Activated CD4-positive, alpha-beta memory T cell treated with anti-CD3 and anti-CD28 coated beads for 36 hours (primary cell): ENCODE measurements at regions of chr1 and their contacts with region 1.

Region 1: DNA sequence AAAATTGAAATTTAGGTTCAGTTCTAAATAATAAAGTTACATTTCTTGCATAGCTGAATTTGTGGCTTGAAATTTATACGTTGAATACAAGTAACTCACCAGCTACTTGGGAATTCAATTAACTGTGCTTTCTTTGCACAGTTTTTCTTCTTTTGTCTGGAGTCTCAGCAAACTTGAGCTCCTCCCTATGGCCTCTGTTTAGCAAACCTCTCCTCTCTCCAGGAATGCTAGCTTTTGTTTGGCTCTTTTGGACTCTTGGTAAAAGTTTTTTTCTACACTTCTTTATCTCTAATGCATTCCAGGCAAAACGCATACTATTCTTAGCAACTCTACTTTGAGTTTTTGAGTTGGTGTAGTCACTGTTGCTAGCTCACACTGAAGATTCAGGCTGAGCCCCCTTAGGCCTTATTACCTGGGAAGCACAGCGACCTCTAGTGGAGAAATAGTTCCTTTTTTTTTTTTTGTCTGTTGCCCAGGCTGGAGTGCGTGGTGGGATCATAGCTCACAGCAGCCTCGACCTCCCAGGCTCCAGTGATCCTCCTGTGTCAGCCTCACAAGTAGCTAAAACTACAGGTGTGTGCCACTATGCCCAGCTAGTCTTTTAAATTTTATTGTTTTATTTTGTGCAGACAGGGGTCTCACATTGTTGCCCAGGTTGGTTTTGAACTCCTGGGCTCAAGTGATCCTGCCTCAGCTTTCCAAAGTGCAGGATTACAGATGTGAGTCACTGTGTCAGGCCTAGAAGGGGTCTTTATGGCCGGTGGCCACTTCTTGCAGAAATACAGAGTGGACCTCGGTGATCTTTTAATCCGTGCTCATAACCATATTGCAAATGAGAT is 61.7 kb downstream of the CASQ2 start:
- DNase-seq: no peak
- H3K4me3 Mint-ChIP-seq: no peak overlapping the region
- H3K27ac Mint-ChIP-seq: no peak overlapping the region
- H3K4me1 Mint-ChIP-seq: no peaks in the 10 kb centered on the region
- H3K27me3 Mint-ChIP-seq: peaks cover 24% of the 10 kb centered on the region

Region 2: GRCh38 chr1:115595279-115596079 is 111.3 kb before region 1 on chr1:
- CTCF ChIA-PET with region 1: interaction called, 29 read pairs
- POLR2A ChIA-PET with region 1: no interaction called
- intact Hi-C with region 1: no loop called
- DNase-seq: peak; percentile 78
- H3K4me3 Mint-ChIP-seq: no peak overlapping the region
- H3K27ac Mint-ChIP-seq: no peak overlapping the region
- H3K4me1 Mint-ChIP-seq: no peaks in the 10 kb centered on the region
- H3K27me3 Mint-ChIP-seq: peaks cover 2% of the 10 kb centered on the region

Region 3: GRCh38 chr1:115609021-115609420 is 97.8 kb before region 1 on chr1:
- CTCF ChIA-PET with region 1: interaction called, 75 read pairs
- POLR2A ChIA-PET with region 1: no interaction called
- intact Hi-C with region 1: loop called (anchors 1 kb)
- DNase-seq: no peak
- H3K4me3 Mint-ChIP-seq: no peak overlapping the region
- H3K27ac Mint-ChIP-seq: no peak overlapping the region
- H3K4me1 Mint-ChIP-seq: no peaks in the 10 kb centered on the region
- H3K27me3 Mint-ChIP-seq: peaks cover 16% of the 10 kb centered on the region

Region 4: DNA sequence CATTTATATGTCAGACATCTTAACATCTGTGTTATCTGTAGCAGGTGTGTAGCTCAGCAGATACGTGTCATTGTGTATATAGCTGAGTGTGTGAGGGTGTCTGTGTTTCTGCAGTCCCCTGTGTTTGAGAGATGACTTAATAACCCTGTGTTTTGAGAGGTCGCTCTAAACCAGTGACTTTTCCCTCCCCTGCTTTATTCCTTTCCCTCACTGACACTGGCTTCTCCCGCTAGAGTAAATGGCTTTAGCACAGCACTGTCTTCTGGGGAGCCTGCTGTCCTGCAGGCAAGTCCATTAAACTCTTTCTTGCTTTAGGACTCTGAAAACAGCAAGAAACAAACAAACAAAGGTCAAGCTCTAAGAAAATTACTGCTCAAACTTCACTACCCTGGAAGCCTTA is 12.0 kb before region 1 on chr1:
- CTCF ChIA-PET with region 1: interaction called, 12 read pairs
- POLR2A ChIA-PET with region 1: no interaction called
- intact Hi-C with region 1: no loop called
- DNase-seq: no peak
- H3K4me3 Mint-ChIP-seq: no peak overlapping the region
- H3K27ac Mint-ChIP-seq: no peak overlapping the region
- H3K4me1 Mint-ChIP-seq: no peaks in the 10 kb centered on the region
- H3K27me3 Mint-ChIP-seq: peaks cover 3% of the 10 kb centered on the region

Region 5: GRCh38 chr1:115717541-115717940 is 10.7 kb after region 1 on chr1:
- CTCF ChIA-PET with region 1: interaction called, 30 read pairs
- POLR2A ChIA-PET with region 1: no interaction called
- intact Hi-C with region 1: no loop called
- DNase-seq: peak; percentile 41
- H3K4me3 Mint-ChIP-seq: no peak overlapping the region
- H3K27ac Mint-ChIP-seq: no peak overlapping the region
- H3K4me1 Mint-ChIP-seq: no peaks in the 10 kb centered on the region
- H3K27me3 Mint-ChIP-seq: peaks cover 7% of the 10 kb centered on the region

Region 6: DNA sequence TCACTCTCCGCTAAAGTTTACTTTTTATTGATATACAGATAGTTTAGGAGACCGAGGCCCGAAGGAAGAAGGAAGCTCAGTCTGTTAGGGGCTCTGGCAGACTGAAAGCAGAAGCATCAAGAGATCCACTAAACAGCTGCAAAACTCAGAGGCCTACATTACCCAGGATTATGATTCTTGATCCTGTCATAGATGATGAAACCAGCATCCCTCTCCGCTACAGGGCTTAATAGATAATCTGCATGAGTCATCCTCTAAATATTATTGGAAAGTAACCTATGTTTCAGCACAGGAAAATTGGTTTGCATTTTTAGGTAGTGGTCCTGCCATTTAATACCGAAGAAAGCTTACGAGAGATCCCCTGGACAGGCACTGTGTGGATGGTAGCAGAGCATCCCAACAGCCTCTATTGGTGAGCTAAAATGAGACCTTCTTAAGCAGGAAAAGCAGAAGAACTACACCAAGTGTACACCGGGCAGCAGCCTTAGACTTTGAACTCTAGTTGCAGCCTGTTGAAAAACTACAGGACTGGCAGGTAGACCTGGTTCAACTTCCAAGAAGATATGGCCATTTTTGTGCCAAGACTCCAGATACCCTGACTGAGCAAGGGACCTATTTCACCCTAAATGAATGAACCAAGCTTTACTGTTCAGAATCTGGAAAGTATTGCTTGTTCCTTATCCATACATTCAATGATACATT is 54.9 kb after region 1 on chr1:
- CTCF ChIA-PET with region 1: interaction called, 13 read pairs
- POLR2A ChIA-PET with region 1: no interaction called
- intact Hi-C with region 1: no loop called
- DNase-seq: no peak
- H3K4me3 Mint-ChIP-seq: no peak overlapping the region
- H3K27ac Mint-ChIP-seq: no peak overlapping the region
- H3K4me1 Mint-ChIP-seq: no peaks in the 10 kb centered on the region
- H3K27me3 Mint-ChIP-seq: peaks cover 5% of the 10 kb centered on the region